ENCODE measurements at regions of chr14 and their contacts with region 1.

Region 1: GRCh38 chr14:70655110-70655826 is 13.6 kb downstream of the TTC9 start:
- DNase-seq: peak; percentile 72
- H3K4me3 Mint-ChIP-seq: peak overlapping the region; percentile 74
- H3K27ac Mint-ChIP-seq: peak overlapping the region; percentile 97
- H3K4me1 Mint-ChIP-seq: peaks cover 85% of the 10 kb centered on the region
- H3K27me3 Mint-ChIP-seq: no peaks in the 10 kb centered on the region

Region 2: DNA sequence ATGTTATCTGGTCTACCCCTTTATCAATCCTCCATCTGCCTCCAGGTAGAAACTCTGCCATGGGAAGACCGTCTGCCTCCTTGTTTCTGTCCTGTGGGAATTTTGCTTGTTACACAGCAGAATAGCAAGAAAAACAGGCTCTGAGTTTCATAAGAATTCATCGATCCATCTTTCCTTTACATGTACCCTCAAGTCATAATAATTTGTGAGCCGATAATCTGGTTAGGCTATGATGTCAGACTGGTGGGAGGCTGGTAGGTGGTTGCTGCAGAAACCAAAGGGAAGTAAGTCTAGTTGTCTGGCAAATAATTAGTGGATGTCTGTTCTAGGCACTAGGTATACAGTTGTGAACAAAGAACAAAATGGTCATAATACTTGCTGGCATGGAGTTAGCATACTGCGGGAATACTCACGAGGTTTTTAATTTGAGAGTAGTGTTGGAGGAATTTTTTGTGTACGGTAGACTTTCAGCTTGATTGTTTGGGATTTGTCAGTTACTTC is 1035.1 kb before region 1 on chr14:
- intact Hi-C with region 1: loop called (anchors 2 kb)
- DNase-seq: no peak
- H3K4me3 Mint-ChIP-seq: peak overlapping the region; percentile 63
- H3K27ac Mint-ChIP-seq: peak overlapping the region; percentile 87
- H3K4me1 Mint-ChIP-seq: peaks cover 98% of the 10 kb centered on the region
- H3K27me3 Mint-ChIP-seq: no peaks in the 10 kb centered on the region

Region 3: GRCh38 chr14:70600382-70601157 is 54.7 kb before region 1 on chr14 and contains the start of gene MED6:
- intact Hi-C with region 1: loop called (anchors 2 kb)
- DNase-seq: peak; percentile 89
- H3K4me3 Mint-ChIP-seq: peak within 1 kb of the TSS; percentile 100
- H3K27ac Mint-ChIP-seq: peak within 1 kb of the TSS; percentile 92
- H3K4me1 Mint-ChIP-seq: peaks cover 18% of the 10 kb centered on the region
- H3K27me3 Mint-ChIP-seq: peaks cover 4% of the 10 kb centered on the region
- total RNA-seq, gene MED6: 59.3 and 63.7 TPM in 2 replicates

Region 4: DNA sequence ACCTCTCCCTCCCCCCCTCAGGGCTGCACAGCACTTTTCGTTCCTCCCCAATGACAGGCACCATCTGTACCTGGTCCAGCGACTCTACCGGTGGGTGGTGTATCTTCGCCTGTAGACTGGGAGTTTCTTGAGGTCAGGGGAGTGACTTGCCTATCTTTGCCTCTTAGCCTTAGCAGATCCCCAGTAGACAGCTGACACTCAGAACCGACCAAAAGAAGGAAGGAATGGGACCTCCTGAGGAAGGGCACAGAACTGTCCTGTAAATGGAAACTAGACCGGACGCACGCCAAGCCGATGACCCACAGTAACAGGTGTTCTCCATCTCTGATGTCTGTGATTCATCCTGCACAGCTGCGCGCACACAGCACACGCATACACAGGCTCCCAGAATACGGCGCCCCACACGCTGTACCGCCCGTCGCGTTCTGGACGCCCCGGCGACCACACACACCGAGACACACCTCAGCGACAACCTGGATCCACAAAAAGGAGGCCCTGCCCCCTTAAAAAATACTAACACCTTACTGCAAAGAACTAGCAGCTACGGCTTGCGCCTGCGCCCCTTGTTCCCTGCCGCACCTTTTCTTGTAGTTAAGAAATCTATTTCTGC is 14.2 kb before region 1 on chr14:
- intact Hi-C with region 1: loop called (anchors 1 kb)
- DNase-seq: peak; percentile 37
- H3K4me3 Mint-ChIP-seq: peak overlapping the region; percentile 97
- H3K27ac Mint-ChIP-seq: peak overlapping the region; percentile 88
- H3K4me1 Mint-ChIP-seq: peaks cover 45% of the 10 kb centered on the region
- H3K27me3 Mint-ChIP-seq: peaks cover 9% of the 10 kb centered on the region